ENCODE measurements at regions of chr2 and their contacts with region 1.

Region 1: GRCh38 chr2:69196327-69197117 is 183.5 kb downstream of the ANTXR1 start:
- DNase-seq: peak; percentile 98
- ATAC-seq: peak; percentile 77
- H3K4me3 ChIP-seq: no peak overlapping the region
- H3K27ac ChIP-seq: peak overlapping the region; percentile 98
- H3K4me1 ChIP-seq: peaks cover 22% of the 10 kb centered on the region
- H3K27me3 ChIP-seq: no peaks in the 10 kb centered on the region
- CTCF ChIP-seq: no peak
- POLR2A ChIP-seq: 0 out of 2 replicates have a peak, but pooled peaks have one; percentile 35
- RAD21 ChIP-seq: peak; percentile 33

Region 2: DNA sequence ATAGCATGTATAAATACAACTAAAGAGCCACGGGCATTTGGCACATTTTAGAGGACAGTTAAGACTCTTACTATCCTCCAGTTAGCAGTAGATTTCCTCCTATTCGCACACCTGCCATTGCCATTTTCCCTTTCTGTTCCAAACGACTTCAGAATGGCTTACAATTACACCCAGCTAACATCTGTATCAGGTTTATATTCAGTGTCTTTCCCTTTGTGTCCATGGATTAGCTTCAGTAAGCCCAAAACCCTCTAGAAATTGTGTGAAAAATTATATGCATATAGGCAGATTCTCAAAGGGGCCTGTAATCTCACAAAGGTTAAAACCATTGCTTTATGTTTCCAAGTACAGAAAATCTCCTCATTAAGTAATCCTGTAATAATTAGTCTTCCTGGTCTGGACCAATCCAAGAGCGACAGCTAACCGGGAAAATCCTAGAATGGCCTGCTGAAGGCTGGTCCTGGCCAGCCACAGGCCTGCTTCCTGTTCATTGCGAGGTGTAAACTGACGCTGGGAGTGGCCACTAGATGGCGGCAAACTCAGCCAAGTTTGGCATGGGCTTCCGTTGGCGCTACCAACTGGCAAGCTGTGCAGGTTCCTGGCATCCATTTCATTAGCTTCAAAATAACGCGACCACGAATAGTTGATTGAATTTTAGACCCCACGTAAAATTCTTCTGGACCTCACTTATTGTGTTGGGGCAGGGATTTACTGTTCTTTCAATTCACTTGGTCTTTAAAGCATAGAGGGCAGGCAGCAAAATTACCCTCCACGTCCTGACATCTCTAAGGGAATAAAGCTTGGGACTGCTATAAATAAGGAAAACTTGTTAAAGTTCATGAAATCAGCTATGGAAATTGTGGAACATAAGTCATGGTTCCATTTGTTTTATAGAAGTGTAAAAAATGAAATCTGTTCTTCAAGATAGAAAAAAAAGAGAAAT is 444.9 kb before region 1 on chr2:
- CTCF ChIA-PET with region 1: no interaction called
- POLR2A ChIA-PET with region 1: no interaction called
- dilution Hi-C with region 1: no loop called
- in situ Hi-C with region 1: no loop called
- intact Hi-C with region 1: no loop called
- DNase-seq: peak; percentile 87
- ATAC-seq: peak; percentile 92
- H3K4me3 ChIP-seq: no peak overlapping the region
- H3K27ac ChIP-seq: no peak overlapping the region
- H3K4me1 ChIP-seq: no peaks in the 10 kb centered on the region
- H3K27me3 ChIP-seq: no peaks in the 10 kb centered on the region
- CTCF ChIP-seq: peak; percentile 95
- POLR2A ChIP-seq: no peak
- RAD21 ChIP-seq: peak; percentile 95

Region 3: GRCh38 chr2:69208023-69208595 is 11.6 kb after region 1 on chr2:
- CTCF ChIA-PET with region 1: no interaction called
- POLR2A ChIA-PET with region 1: no interaction called
- dilution Hi-C with region 1: no loop called
- in situ Hi-C with region 1: no loop called
- intact Hi-C with region 1: no loop called
- DNase-seq: no peak
- ATAC-seq: no peak
- H3K4me3 ChIP-seq: no peak overlapping the region
- H3K27ac ChIP-seq: no peak overlapping the region
- H3K4me1 ChIP-seq: no peaks in the 10 kb centered on the region
- H3K27me3 ChIP-seq: no peaks in the 10 kb centered on the region
- CTCF ChIP-seq: peak; percentile 30; the same call in 1 of the 2 replicates
- POLR2A ChIP-seq: no peak
- RAD21 ChIP-seq: peak; percentile 38

Region 4: GRCh38 chr2:69242651-69243051 is 46.1 kb after region 1 on chr2:
- CTCF ChIA-PET with region 1: no interaction called
- POLR2A ChIA-PET with region 1: no interaction called
- dilution Hi-C with region 1: no loop called
- in situ Hi-C with region 1: no loop called
- intact Hi-C with region 1: loop called (anchors 2 kb)
- DNase-seq: peak; percentile 86
- ATAC-seq: peak; percentile 81
- H3K4me3 ChIP-seq: no peak overlapping the region
- H3K27ac ChIP-seq: peak overlapping the region; percentile 98
- H3K4me1 ChIP-seq: peaks cover 41% of the 10 kb centered on the region
- H3K27me3 ChIP-seq: no peaks in the 10 kb centered on the region
- CTCF ChIP-seq: no peak
- POLR2A ChIP-seq: no peak
- RAD21 ChIP-seq: no peak